ENCODE measurements at regions of chr12 and their contacts with region 1.

Region 1: GRCh38 chr12:49018261-49019119 is at the start of gene PRKAG1:
- DNase-seq: peak; percentile 97
- H3K4me3 Mint-ChIP-seq: peak within 1 kb of the TSS; percentile 88
- H3K27ac Mint-ChIP-seq: peak within 1 kb of the TSS; percentile 95
- H3K4me1 Mint-ChIP-seq: peaks cover 53% of the 10 kb centered on the region
- H3K27me3 Mint-ChIP-seq: no peaks in the 10 kb centered on the region
- total RNA-seq, gene PRKAG1: 85.0 and 85.1 TPM in 2 replicates

Region 2: GRCh38 chr12:48957141-48958048 is 61.1 kb before region 1 on chr12 and contains the start of gene ARF3:
- intact Hi-C with region 1: loop called (anchors 1 kb)
- DNase-seq: peak; percentile 91
- H3K4me3 Mint-ChIP-seq: peak within 1 kb of the TSS; percentile 94
- H3K27ac Mint-ChIP-seq: peak within 1 kb of the TSS; percentile 94
- H3K4me1 Mint-ChIP-seq: peaks cover 46% of the 10 kb centered on the region
- H3K27me3 Mint-ChIP-seq: peaks cover 33% of the 10 kb centered on the region
- total RNA-seq, gene ARF3: 116 and 117 TPM in 2 replicates

Region 3: GRCh38 chr12:48995061-48995879 is 23.2 kb before region 1 on chr12:
- intact Hi-C with region 1: loop called (anchors 1 kb)
- DNase-seq: peak; percentile 39
- H3K4me3 Mint-ChIP-seq: no peak overlapping the region
- H3K27ac Mint-ChIP-seq: peak overlapping the region; percentile 52
- H3K4me1 Mint-ChIP-seq: peaks cover 25% of the 10 kb centered on the region
- H3K27me3 Mint-ChIP-seq: peaks cover 49% of the 10 kb centered on the region

Region 4: DNA sequence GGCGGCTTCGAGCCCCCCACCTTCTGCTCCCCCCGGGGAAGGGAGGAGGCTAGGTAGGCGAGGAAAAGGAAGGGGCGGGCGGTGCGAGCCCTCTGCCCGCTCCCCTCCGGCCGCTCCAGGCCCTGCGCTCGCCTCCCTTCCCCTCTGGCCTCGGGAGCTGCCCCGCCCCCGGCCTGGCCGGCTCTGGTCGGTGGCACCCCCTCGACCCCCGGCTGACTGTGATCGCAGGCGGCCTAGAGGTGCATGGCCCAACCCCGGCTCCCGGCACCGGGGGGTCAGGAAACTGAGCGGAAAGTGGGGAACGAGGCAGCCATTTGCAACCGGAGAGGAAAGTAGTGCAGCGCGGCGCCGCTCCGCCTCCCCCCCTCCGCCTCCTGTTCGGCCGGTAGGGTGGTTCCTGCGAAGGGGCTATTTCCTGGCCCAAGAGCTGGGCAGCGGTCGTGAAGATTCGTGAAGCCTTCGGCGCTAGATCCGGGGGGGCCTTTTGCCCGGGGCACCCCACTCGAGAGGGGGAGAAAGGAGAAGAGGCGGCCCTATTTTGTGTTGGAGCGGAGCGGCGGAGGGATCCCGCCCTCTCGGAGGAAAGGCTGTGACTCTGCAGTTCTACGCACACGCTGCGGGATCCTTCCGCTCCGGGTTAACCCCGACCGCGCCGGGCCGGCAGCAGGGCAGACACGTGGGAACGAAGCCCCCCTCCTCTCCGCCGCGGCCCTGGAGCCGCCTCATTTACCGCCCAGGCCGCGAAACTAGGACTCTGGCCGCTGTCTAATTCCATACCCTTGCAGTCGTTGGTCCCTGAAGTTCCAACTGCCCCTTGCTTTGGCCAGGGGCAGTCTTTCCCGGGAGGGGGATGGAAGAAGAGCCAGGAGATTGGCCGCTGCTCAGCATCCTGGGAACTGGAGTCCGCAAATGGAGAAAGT is 42.0 kb after region 1 on chr12 and contains the start of gene KMT2D:
- intact Hi-C with region 1: loop called (anchors 1 kb)
- DNase-seq: peak; percentile 83
- H3K4me3 Mint-ChIP-seq: peak within 1 kb of the TSS; percentile 95
- H3K27ac Mint-ChIP-seq: peak within 1 kb of the TSS; percentile 95
- H3K4me1 Mint-ChIP-seq: peaks cover 48% of the 10 kb centered on the region
- H3K27me3 Mint-ChIP-seq: no peaks in the 10 kb centered on the region
- total RNA-seq, gene KMT2D: 107 and 109 TPM in 2 replicates

Region 5: DNA sequence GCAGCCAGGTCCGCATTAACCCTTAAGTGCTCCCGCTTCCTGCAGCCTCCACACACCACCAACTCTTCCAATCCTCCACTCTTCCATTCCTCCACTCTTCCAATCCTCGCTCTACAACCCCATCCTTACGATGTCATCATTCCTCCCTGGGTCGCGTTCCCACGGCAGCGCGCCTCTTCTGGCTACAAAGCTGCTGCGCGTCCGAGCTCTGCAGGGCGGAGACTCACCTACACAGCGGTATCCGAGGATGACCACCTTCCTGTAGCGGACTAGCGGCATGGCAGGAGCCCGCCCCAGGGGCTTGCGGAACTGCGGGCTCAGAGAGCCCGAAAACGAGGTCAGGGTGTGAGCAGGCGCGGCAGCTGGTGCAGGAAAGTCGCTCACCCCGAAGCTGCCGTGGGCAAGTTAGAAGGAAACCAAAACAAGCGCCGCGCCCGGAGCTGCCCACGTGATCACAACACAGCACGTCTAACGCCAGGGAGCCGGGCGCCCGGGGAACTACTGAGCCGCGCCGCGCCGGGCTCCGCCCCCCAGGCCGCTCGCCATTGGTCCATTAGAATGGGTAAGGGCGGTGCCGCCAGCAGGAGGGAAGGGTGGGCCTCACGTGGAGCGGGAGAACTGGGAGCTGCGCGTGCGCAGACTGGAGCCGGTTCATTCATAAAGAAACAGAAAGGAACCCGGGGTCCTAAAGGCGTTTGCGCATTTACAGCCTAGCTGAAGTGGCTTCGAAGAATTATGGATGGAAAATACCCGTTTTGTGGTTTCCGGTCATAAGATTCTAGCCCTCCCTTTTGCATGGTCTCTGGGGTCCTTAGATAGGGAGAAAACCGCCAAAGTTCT is 51.2 kb after region 1 on chr12 and contains the start of gene RHEBL1:
- intact Hi-C with region 1: loop called (anchors 1 kb)
- DNase-seq: peak; percentile 100
- H3K4me3 Mint-ChIP-seq: peak within 1 kb of the TSS; percentile 100
- H3K27ac Mint-ChIP-seq: peak within 1 kb of the TSS; percentile 97
- H3K4me1 Mint-ChIP-seq: peaks cover 26% of the 10 kb centered on the region
- H3K27me3 Mint-ChIP-seq: no peaks in the 10 kb centered on the region
- total RNA-seq, gene RHEBL1: 8.6 and 10.7 TPM in 2 replicates

Region 6: DNA sequence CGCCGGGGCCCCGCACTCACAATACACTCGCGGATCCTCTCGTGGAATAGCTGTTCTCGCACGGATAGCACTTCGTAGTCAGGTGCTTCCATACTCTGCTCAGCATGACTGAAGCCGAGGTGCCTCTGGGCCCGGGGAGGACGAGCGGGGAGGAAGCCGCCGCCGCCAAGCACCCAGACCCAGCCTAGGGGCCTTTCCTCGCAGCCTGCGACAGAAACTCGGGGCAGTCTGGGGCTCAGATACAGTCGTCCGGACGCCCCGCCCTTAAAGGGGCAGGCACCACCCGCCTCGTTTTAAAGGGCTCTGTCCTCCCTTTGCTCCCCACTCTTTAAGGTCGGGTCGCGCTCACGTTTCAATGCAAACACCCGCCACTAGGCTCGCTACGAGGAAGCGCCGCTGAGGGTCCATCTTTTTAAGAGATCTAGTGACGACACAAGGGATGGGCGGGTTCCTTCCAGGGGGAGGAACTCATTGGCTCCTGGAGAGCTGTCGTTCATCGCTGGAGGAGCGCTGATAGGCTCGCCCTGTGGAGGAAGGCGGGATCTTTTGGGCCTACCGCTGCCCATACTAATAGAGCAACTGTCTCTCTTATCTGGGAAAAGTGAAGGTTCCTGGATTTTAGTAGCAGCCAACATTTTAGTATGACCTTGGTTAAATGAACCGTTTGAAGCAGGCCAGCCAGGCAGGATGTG is 92.1 kb after region 1 on chr12 and contains the start of gene LMBR1L:
- intact Hi-C with region 1: loop called (anchors 1 kb)
- DNase-seq: peak; percentile 93
- H3K4me3 Mint-ChIP-seq: peak within 1 kb of the TSS; percentile 93
- H3K27ac Mint-ChIP-seq: peak within 1 kb of the TSS; percentile 92
- H3K4me1 Mint-ChIP-seq: peaks cover 37% of the 10 kb centered on the region
- H3K27me3 Mint-ChIP-seq: no peaks in the 10 kb centered on the region
- total RNA-seq, gene LMBR1L: 50.4 and 52.5 TPM in 2 replicates

Region 7: GRCh38 chr12:49161092-49161795 is 142.8 kb after region 1 on chr12:
- intact Hi-C with region 1: no loop called
- DNase-seq: no peak
- H3K4me3 Mint-ChIP-seq: no peak overlapping the region
- H3K27ac Mint-ChIP-seq: no peak overlapping the region
- H3K4me1 Mint-ChIP-seq: no peaks in the 10 kb centered on the region
- H3K27me3 Mint-ChIP-seq: no peaks in the 10 kb centered on the region

Region 8: DNA sequence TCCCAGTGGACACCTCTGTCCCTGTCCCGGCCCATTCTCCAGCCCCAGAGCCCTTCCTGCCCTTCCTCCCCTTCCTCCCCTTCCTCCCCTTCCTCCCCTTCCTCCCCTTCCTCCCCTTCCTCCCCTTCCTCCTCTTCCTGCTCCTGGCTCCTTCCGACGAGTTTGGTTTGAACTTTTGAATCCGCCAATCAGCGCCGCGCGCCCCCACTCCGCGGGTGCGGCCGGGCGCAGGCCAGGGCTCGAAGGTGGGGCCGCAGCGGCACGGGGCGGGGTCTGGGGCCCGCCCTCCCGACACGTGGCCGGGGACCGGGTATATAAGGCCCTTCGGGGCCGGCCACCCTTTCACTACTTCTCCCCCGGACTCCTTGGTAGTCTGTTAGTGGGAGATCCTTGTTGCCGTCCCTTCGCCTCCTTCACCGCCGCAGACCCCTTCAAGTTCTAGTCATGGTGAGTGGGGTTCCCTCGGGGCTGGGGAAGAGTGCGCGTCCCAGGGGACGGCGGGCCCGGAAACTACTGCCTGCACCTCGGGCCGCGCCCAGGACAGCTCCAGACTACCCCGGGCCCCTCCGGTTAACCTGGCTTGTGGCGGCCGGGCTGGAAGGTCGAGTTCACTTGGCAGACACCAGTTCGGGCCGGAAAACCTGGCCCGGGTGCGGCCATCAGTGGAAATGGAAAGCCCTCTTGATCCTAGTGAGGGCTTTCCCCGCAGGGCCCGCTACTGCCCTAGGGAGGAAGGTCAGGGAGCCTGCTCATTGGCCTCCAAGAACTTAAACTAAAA is 246.4 kb after region 1 on chr12 and contains the start of gene TUBA1C:
- intact Hi-C with region 1: loop called (anchors 2 kb)
- DNase-seq: peak; percentile 92
- H3K4me3 Mint-ChIP-seq: peak within 1 kb of the TSS; percentile 99
- H3K27ac Mint-ChIP-seq: peak within 1 kb of the TSS; percentile 100
- H3K4me1 Mint-ChIP-seq: peaks cover 38% of the 10 kb centered on the region
- H3K27me3 Mint-ChIP-seq: no peaks in the 10 kb centered on the region
- total RNA-seq, gene TUBA1C: 261 and 270 TPM in 2 replicates

Measured in activated T-helper 1 cell treated with anti-CD3 and anti-CD28 coated beads, Interleukin-12 subunit alpha, Interleukin-12 subunit beta, Interleukin-2, Interleukin-4 antibody, amounts not matched to agents 30 ng/mL and 10 ng/mL and 1 ng/mL, durations not matched to agents 14 hours and 24 hours and 36 hours (primary cell).